ENCODE measurements at regions of chr15 and their contacts with region 1.

Region 1: DNA sequence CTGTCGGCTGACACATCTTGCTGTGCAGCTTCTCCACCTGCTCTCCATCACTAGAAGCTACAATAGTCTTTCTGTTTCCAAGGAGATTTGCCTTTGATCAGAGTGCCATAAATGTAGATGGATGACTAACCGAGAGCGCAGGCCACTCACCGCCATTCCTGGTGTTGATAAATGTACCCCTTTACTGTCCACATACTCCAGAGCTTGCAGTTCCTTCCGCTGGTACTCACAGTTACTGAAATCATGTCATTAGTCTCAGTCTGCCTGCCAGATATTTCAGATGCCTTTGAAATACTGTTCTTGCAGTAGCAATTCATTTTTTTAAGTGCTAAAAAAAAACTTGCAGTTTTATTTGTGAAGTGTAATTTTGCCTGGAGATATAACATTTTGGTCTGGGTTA is 72.3 kb downstream of the BLM start:
- DNase-seq: no peak
- H3K4me3 Mint-ChIP-seq: no peak overlapping the region
- H3K27ac Mint-ChIP-seq: peak overlapping the region; percentile 23
- H3K4me1 Mint-ChIP-seq: peaks cover 32% of the 10 kb centered on the region
- H3K27me3 Mint-ChIP-seq: no peaks in the 10 kb centered on the region

Region 2: GRCh38 chr15:90762109-90762508 is 27.4 kb before region 1 on chr15:
- intact Hi-C with region 1: loop called (anchors 5 kb)
- DNase-seq: no peak
- H3K4me3 Mint-ChIP-seq: no peak overlapping the region
- H3K27ac Mint-ChIP-seq: peak overlapping the region; percentile 44
- H3K4me1 Mint-ChIP-seq: peaks cover 31% of the 10 kb centered on the region
- H3K27me3 Mint-ChIP-seq: no peaks in the 10 kb centered on the region

Region 3: GRCh38 chr15:90807074-90807785 is 17.8 kb after region 1 on chr15:
- intact Hi-C with region 1: loop called (anchors 2 kb)
- DNase-seq: no peak
- H3K4me3 Mint-ChIP-seq: peak overlapping the region; percentile 68
- H3K27ac Mint-ChIP-seq: peak overlapping the region; percentile 86
- H3K4me1 Mint-ChIP-seq: peaks cover 68% of the 10 kb centered on the region
- H3K27me3 Mint-ChIP-seq: no peaks in the 10 kb centered on the region

Measured in activated T-helper 1 cell treated with anti-CD3 and anti-CD28 coated beads, Interleukin-12 subunit alpha, Interleukin-12 subunit beta, Interleukin-2, Interleukin-4 antibody, amounts not matched to agents 30 ng/mL and 10 ng/mL and 1 ng/mL, durations not matched to agents 14 hours and 24 hours and 36 hours (primary cell).